HCT116 (cell line): ENCODE measurements at regions of chr10 and their contacts with region 1.

Region 1: DNA sequence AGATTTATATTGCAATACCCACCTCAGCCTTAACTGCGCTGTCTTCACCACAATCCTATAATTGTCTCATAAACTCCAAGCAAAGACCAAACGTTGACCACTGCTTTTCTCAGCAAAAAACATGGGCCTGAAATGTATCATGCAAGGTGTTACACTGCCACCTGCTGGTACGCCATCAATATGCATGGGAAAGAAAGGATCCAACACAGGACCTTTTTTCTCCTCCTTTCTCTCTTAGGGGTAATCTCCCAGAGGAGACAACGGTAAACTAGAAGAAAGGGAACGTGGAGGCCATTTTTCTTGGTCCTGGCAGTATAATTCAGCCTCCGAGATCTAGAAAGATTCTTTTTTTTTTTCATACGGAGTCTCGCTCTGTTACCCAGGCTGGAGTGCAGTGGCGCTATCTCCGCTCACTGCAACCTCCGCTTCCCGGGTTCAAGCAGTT is 79.1 kb upstream of the MPP7 start:
- DNase-seq: peak; percentile 92
- ATAC-seq: peak; percentile 95
- H3K4me3 ChIP-seq: no peak overlapping the region
- H3K27ac ChIP-seq: no peak overlapping the region; the same call in 1 of the 2 replicates
- H3K4me1 ChIP-seq: peaks cover 19 to 23% of the 10 kb centered on the region in 2 experiments
- H3K27me3 ChIP-seq: no peaks in the 10 kb centered on the region
- CTCF ChIP-seq: peak; percentile 89 to 99 (median 98)
- POLR2A ChIP-seq: no peak
- RAD21 ChIP-seq: peak; percentile 100

Region 2: DNA sequence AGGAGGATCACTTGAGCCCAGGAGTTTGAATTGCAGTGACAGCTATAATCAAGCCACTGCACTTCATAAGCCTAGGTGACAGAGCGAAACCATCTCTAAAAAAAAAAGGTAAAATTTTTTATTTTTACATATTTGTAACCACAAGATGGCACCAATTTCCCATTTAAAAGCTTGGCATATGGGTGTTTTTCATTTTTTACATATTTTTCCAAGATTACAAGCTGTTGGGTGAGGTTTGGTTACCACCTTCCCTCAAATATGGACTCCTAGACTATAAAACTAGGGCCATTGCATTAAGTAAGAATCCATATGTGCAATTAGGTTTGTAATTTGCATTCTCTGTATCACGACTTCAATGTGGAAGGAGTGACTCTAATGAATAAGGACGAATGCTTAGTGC is 1012.0 kb before region 1 on chr10:
- CTCF ChIA-PET with region 1: interaction called, 5 read pairs
- POLR2A ChIA-PET with region 1: no interaction called
- RAD21 ChIA-PET with region 1: no interaction called
- intact Hi-C with region 1: loop called (anchors 2 kb)
- DNase-seq: no peak
- ATAC-seq: peak; percentile 54
- H3K4me3 ChIP-seq: no peak overlapping the region
- H3K27ac ChIP-seq: no peak overlapping the region
- H3K4me1 ChIP-seq: no peaks in the 10 kb centered on the region
- H3K27me3 ChIP-seq: no peaks in the 10 kb centered on the region
- CTCF ChIP-seq: peak in 2 of 3 experiments; percentile 38 to 40; a peak in 3 of 6 replicates
- POLR2A ChIP-seq: no peak
- RAD21 ChIP-seq: peak; percentile 71

Region 3: GRCh38 chr10:27558612-27559020 is 823.3 kb before region 1 on chr10:
- CTCF ChIA-PET with region 1: interaction called, 6 read pairs
- POLR2A ChIA-PET with region 1: no interaction called
- RAD21 ChIA-PET with region 1: no interaction called
- intact Hi-C with region 1: loop called (anchors 2 kb)
- DNase-seq: peak; percentile 58
- ATAC-seq: peak; percentile 87
- H3K4me3 ChIP-seq: no peak overlapping the region
- H3K27ac ChIP-seq: no peak overlapping the region; the same call in 1 of the 2 replicates
- H3K4me1 ChIP-seq: peaks cover 0 to 8% of the 10 kb centered on the region in 2 experiments; a peak in 2 of 4 replicates
- H3K27me3 ChIP-seq: no peaks in the 10 kb centered on the region
- CTCF ChIP-seq: peak; percentile 70 to 85 (median 76); a peak in 5 of 6 replicates
- POLR2A ChIP-seq: no peak
- RAD21 ChIP-seq: peak; percentile 93

Region 4: DNA sequence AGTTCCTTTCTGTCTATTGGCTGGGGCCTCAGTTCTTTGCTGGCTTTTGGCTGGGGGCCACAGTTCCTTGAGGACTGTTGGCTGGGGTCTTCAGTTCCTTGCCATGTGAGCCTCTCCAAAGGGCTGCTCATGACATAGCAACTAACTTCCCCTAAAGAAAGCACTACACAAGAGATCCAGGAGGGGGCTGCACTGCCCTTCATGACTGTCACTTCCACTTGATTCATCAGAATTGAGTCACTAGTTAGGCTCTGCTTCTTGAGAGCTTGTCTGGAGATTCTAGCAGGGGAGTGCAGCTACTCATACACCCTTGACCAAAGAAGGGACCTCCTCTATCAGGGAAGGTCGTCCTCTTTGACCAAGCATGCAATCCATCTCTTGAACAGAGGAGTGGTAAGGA is 598.3 kb before region 1 on chr10:
- CTCF ChIA-PET with region 1: no interaction called
- POLR2A ChIA-PET with region 1: no interaction called
- RAD21 ChIA-PET with region 1: no interaction called
- intact Hi-C with region 1: loop called (anchors 10 kb)
- DNase-seq: peak; percentile 81
- ATAC-seq: peak; percentile 98
- H3K4me3 ChIP-seq: no peak overlapping the region
- H3K27ac ChIP-seq: peak overlapping the region; percentile 52
- H3K4me1 ChIP-seq: peaks cover 7 to 20% of the 10 kb centered on the region in 2 experiments; a peak in 3 of 4 replicates
- H3K27me3 ChIP-seq: no peaks in the 10 kb centered on the region
- CTCF ChIP-seq: peak; percentile 71 to 74 (median 74); a peak in 5 of 6 replicates
- POLR2A ChIP-seq: no peak
- RAD21 ChIP-seq: peak; percentile 92

Region 5: GRCh38 chr10:28095791-28096378 is 286.0 kb before region 1 on chr10:
- CTCF ChIA-PET with region 1: no interaction called
- POLR2A ChIA-PET with region 1: no interaction called
- RAD21 ChIA-PET with region 1: no interaction called
- intact Hi-C with region 1: no loop called
- DNase-seq: no peak
- ATAC-seq: peak; percentile 56
- H3K4me3 ChIP-seq: peak overlapping the region in 1 of 2 experiments; percentile 17; a peak in 1 of 4 replicates
- H3K27ac ChIP-seq: peak overlapping the region; percentile 96
- H3K4me1 ChIP-seq: peaks cover 71 to 89% of the 10 kb centered on the region in 2 experiments
- H3K27me3 ChIP-seq: no peaks in the 10 kb centered on the region
- CTCF ChIP-seq: no peak
- POLR2A ChIP-seq: no peak
- RAD21 ChIP-seq: no peak

Region 6: DNA sequence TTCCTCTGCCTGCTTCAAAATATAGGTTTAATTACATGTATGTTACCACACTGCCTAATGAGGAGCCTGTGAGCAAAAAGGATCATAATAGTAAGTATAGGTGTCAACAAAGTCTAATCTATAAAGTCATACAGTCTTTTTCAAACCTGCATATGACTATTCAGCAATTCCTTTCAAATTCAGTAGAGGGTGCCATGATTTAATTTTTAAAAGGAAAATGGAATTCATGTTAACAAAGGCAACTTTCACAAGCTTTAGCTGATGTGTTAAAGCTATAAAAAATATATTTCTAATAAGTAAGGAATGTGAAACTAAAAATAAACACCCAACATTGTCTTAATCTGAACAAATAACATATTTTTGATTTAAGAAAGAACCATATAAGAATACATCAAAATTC is 131.1 kb before region 1 on chr10:
- CTCF ChIA-PET with region 1: interaction called, 60 read pairs
- POLR2A ChIA-PET with region 1: no interaction called
- RAD21 ChIA-PET with region 1: no interaction called
- intact Hi-C with region 1: loop called (anchors 1 kb)
- DNase-seq: no peak
- ATAC-seq: no peak
- H3K4me3 ChIP-seq: no peak overlapping the region
- H3K27ac ChIP-seq: peak overlapping the region; percentile 44
- H3K4me1 ChIP-seq: peaks cover 60 to 88% of the 10 kb centered on the region in 2 experiments
- H3K27me3 ChIP-seq: no peaks in the 10 kb centered on the region
- CTCF ChIP-seq: peak; percentile 40 to 85 (median 66); a peak in 5 of 6 replicates
- POLR2A ChIP-seq: no peak
- RAD21 ChIP-seq: peak; percentile 80

Region 7: DNA sequence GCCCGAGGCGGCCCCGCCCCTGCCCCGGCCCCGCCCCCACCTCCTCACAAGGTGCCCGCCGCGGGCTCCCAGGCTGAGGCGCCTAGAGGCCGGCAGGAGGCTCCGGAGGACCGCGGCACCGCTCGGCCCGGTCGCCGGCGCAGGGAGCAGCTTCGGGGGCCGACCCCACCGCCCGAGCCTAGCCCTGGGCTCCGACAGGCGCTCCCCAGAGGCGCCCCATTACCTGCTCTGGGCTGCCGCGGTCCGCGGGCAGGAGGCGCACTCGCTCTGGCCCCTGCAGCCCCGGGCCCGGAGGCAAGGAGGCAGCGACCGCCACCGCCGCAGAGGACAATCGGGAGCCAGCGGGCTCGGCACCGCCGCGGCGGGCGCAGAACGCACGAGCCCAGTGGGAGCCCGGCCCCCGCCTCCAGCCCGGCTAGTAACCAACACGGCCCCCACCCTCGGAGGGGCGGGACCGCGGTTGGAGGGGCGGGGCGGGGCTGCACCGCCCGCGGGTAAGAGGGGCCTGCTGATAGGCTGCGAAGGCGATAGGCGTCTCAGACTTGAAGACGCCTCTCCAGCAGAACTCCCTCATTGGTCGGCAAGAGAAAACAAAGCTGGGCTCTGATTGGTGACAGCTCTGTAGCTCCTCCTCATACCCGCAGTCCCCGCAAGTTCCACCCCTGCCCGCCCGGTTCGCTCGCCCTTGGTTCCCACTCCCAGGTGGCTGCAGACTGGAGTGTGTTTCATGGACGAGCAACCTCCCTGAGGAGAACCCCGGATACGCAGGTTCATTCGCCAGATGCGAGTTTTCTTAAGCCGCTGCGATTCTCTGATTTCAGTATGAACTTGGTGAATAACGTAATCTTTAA is 79.1 kb before region 1 on chr10 and contains the start of gene MPP7:
- CTCF ChIA-PET with region 1: interaction called, 8 read pairs
- POLR2A ChIA-PET with region 1: interaction called, 3 read pairs
- RAD21 ChIA-PET with region 1: no interaction called
- intact Hi-C with region 1: loop called (anchors 2 kb)
- DNase-seq: peak; percentile 98
- ATAC-seq: peak; percentile 98
- H3K4me3 ChIP-seq: peak within 1 kb of the TSS; percentile 59 to 70
- H3K27ac ChIP-seq: peak within 1 kb of the TSS; percentile 97
- H3K4me1 ChIP-seq: peaks cover 27 to 32% of the 10 kb centered on the region in 2 experiments
- H3K27me3 ChIP-seq: peaks cover 11% of the 10 kb centered on the region
- CTCF ChIP-seq: peak; percentile 19 to 29 (median 22); a peak in 3 of 6 replicates
- POLR2A ChIP-seq: no peak
- RAD21 ChIP-seq: peak; percentile 52
- total RNA-seq, gene MPP7: 64.5 TPM